CD8-positive, alpha-beta T cell (primary cell): ENCODE measurements at regions of chr21 and their contacts with region 1.

Region 1: DNA sequence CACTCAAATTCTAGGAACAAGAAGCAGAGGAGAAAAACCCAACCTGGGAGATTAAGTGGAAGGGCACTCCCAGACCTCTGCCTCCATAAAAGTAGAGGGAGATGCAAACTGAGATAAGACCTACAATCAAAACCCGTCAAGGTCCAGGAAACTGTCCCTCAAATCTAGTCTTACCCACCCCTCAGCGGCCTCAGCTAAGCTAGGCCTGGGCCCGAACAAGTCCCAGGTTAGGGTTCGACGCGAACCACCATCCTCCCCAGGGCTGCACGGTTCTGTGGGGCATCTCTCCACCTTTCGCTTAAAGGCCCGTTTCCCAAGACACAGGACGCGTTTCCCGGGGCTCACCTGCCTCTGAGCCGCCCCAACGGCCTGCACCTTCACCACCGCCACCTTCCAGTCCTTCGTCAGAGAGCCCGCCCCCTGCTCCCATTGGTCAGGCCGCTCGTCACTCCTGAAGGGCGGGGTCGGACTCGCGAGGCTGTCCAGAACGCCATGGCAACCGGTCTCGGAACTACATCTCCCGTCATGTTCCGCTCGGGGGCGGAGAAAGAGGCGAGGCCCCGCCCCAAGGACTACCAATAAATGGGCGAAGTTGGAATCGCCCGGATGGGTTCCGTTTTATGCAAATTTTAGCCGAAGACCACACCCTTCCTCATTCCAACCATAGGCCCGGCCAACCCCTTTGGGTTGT is at the start of gene CRYZL1:
- DNase-seq: peak; percentile 100
- ATAC-seq: peak; percentile 78
- H3K4me3 ChIP-seq: peak within 1 kb of the TSS; percentile 83 to 95
- H3K4me3 Mint-ChIP-seq: peak within 1 kb of the TSS; percentile 90
- H3K27ac ChIP-seq: peak within 1 kb of the TSS; percentile 89 to 92
- H3K27ac Mint-ChIP-seq: peak within 1 kb of the TSS; percentile 92
- H3K4me1 ChIP-seq: peaks cover 15% of the 10 kb centered on the region
- H3K4me1 Mint-ChIP-seq: peaks cover 41% of the 10 kb centered on the region
- H3K27me3 ChIP-seq: no peaks in the 10 kb centered on the region
- H3K27me3 Mint-ChIP-seq: peaks cover 7% of the 10 kb centered on the region
- CTCF ChIP-seq: no peak
- total RNA-seq, gene CRYZL1: 19.9 to 21.8 TPM

Region 2: DNA sequence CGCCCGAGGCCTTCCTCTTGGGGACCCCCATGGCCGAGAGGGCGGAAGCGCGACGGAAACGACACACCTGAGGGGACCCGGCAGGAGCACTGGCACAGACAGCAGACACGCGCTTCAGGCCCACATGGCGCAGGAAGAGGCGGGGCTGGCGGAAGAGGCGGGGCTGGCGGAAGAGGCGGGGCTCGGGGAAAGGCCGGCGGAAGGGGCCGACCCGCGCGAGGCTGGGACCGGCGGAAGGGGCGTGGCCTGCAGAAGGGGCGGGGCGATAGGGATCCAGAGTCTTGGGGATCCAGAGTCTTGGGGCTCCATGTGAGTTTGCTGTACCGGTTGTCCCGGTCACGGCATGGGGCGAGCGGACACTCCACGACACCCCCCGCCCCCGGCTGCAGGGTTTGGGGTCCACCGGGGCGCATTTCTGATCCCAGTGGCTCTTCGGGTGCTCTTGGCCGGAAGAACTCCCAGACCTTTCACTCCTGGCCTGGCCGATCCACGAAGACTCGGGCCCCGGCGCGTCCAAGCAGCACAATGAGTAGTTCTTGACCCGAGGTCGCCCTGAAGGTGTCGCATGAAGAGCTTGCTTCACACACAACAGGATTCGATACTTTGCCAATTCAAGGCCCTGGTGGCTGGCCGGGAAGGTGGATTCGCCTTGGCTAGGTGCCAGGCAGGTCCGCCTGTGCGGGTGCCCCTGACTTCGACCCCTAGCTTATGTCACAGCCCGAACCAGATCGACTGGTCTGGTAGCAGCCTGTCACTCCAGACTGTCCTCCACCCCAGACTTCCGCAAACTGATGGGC is 1248.4 kb before region 1 on chr21 and contains the start of gene URB1:
- CTCF ChIA-PET with region 1: no interaction called
- POLR2A ChIA-PET with region 1: no interaction called
- intact Hi-C with region 1: loop called (anchors 5 kb)
- DNase-seq: peak; percentile 89 to 98 (median 94)
- ATAC-seq: peak; percentile 97
- H3K4me3 ChIP-seq: peak within 1 kb of the TSS; percentile 94 to 98
- H3K4me3 Mint-ChIP-seq: peak within 1 kb of the TSS; percentile 89
- H3K27ac ChIP-seq: peak within 1 kb of the TSS; percentile 65 to 83
- H3K27ac Mint-ChIP-seq: peak within 1 kb of the TSS; percentile 80
- H3K4me1 ChIP-seq: peaks cover 13% of the 10 kb centered on the region
- H3K4me1 Mint-ChIP-seq: peaks cover 50% of the 10 kb centered on the region
- H3K27me3 ChIP-seq: no peaks in the 10 kb centered on the region
- H3K27me3 Mint-ChIP-seq: peaks cover 7% of the 10 kb centered on the region
- CTCF ChIP-seq: no peak
- total RNA-seq, gene URB1: 5.4 to 5.9 TPM

Region 3: GRCh38 chr21:32770871-32771523 is 870.5 kb before region 1 on chr21:
- CTCF ChIA-PET with region 1: no interaction called
- POLR2A ChIA-PET with region 1: no interaction called
- intact Hi-C with region 1: loop called in 1 of 2 experiments (anchors 10 kb)
- DNase-seq: peak in 5 of 9 experiments; percentile 26 to 59 (median 51)
- ATAC-seq: peak; percentile 15
- H3K4me3 ChIP-seq: peak overlapping the region; percentile 69 to 82
- H3K4me3 Mint-ChIP-seq: peak overlapping the region; percentile 96
- H3K27ac ChIP-seq: peak overlapping the region; percentile 69 to 75
- H3K27ac Mint-ChIP-seq: peak overlapping the region; percentile 87
- H3K4me1 ChIP-seq: peaks cover 42% of the 10 kb centered on the region
- H3K4me1 Mint-ChIP-seq: peaks cover 66% of the 10 kb centered on the region
- H3K27me3 ChIP-seq: no peaks in the 10 kb centered on the region
- H3K27me3 Mint-ChIP-seq: no peaks in the 10 kb centered on the region
- CTCF ChIP-seq: no peak

Region 4: GRCh38 chr21:33479679-33480480 is 161.6 kb before region 1 on chr21 and contains the start of gene TMEM50B:
- CTCF ChIA-PET with region 1: no interaction called
- POLR2A ChIA-PET with region 1: interaction called, 3 read pairs
- intact Hi-C with region 1: loop called in 1 of 2 experiments (anchors 1 kb)
- DNase-seq: peak; percentile 94 to 98 (median 95)
- ATAC-seq: peak; percentile 87
- H3K4me3 ChIP-seq: peak within 1 kb of the TSS; percentile 79 to 88
- H3K4me3 Mint-ChIP-seq: peak within 1 kb of the TSS; percentile 89
- H3K27ac ChIP-seq: peak within 1 kb of the TSS; percentile 83 to 87
- H3K27ac Mint-ChIP-seq: peak within 1 kb of the TSS; percentile 96
- H3K4me1 ChIP-seq: peaks cover 13% of the 10 kb centered on the region
- H3K4me1 Mint-ChIP-seq: peaks cover 28% of the 10 kb centered on the region
- H3K27me3 ChIP-seq: no peaks in the 10 kb centered on the region
- H3K27me3 Mint-ChIP-seq: no peaks in the 10 kb centered on the region
- CTCF ChIP-seq: peak; percentile 31
- total RNA-seq, gene TMEM50B: 32.6 to 34.0 TPM

Region 5: DNA sequence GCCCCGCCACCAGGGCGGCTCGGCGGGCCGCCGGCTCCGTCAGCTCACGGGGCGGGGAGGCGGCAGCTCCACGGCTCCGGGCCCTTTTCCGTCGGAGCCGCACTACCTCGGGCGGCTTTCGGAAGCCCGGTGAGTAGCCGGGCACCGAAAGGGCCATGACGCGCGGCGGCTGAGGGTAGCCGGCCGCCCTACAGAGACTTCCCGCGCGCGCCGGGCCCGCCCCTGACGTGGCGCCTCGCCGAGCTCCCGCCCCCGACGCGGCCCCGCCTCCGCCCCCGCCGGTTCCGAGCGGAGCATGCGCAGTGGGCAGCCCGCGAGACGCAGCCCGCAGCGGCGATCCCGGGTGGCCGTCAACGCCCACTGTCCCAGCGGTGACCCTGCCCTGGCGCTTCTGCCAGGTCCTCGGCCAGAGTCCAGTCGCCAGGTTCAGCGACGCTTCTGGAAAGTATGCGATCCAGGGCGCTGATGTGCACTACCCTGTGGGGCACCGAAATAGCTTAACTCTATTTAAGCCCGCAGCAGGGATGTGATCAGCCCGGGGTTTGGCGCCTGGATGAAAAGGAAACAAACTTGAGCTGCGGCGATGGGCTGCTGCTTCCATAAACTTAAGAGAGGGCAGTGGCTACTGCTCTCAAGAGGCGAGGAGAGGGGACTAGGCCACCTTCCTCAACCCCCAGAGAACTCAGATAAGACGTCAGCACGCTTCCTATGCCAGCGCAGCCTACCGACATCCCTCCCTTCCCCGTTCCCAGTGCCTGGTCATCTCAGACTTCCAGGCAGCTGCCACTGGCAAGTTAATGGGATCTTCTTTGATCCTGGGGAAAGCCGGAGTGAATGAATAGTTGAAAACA is 52.8 kb before region 1 on chr21 and contains the start of gene DONSON:
- CTCF ChIA-PET with region 1: no interaction called
- POLR2A ChIA-PET with region 1: no interaction called
- intact Hi-C with region 1: loop called (anchors 1 kb)
- DNase-seq: peak; percentile 72 to 94 (median 87)
- ATAC-seq: peak; percentile 94
- H3K4me3 ChIP-seq: peak within 1 kb of the TSS; percentile 82 to 91
- H3K4me3 Mint-ChIP-seq: peak within 1 kb of the TSS; percentile 95
- H3K27ac ChIP-seq: peak within 1 kb of the TSS; percentile 53 to 61
- H3K27ac Mint-ChIP-seq: peak within 1 kb of the TSS; percentile 87
- H3K4me1 ChIP-seq: peaks cover 14% of the 10 kb centered on the region
- H3K4me1 Mint-ChIP-seq: peaks cover 16% of the 10 kb centered on the region
- H3K27me3 ChIP-seq: no peaks in the 10 kb centered on the region
- H3K27me3 Mint-ChIP-seq: no peaks in the 10 kb centered on the region
- CTCF ChIP-seq: no peak
- total RNA-seq, gene DONSON: 11.0 to 11.9 TPM

Region 6: GRCh38 chr21:34073032-34073869 is 431.8 kb after region 1 on chr21 and contains the starts of genes MRPS6 and SLC5A3:
- CTCF ChIA-PET with region 1: no interaction called
- POLR2A ChIA-PET with region 1: no interaction called
- intact Hi-C with region 1: loop called (anchors 2 to 5 kb)
- DNase-seq: peak; percentile 37 to 85 (median 72)
- ATAC-seq: peak; percentile 79
- H3K4me3 ChIP-seq: peak within 1 kb of the TSS; percentile 76 to 84
- H3K4me3 Mint-ChIP-seq: peak within 1 kb of the TSS; percentile 94
- H3K27ac ChIP-seq: peak within 1 kb of the TSS; percentile 67 to 72
- H3K27ac Mint-ChIP-seq: peak within 1 kb of the TSS; percentile 94
- H3K4me1 ChIP-seq: peaks cover 39% of the 10 kb centered on the region
- H3K4me1 Mint-ChIP-seq: peaks cover 47% of the 10 kb centered on the region
- H3K27me3 ChIP-seq: no peaks in the 10 kb centered on the region
- H3K27me3 Mint-ChIP-seq: no peaks in the 10 kb centered on the region
- CTCF ChIP-seq: no peak
- total RNA-seq, gene MRPS6: 14.3 to 15.4 TPM
- total RNA-seq, gene SLC5A3: 4.6 to 5.2 TPM